ENCODE measurements at regions of chr4 and their contacts with region 1.

Region 1: DNA sequence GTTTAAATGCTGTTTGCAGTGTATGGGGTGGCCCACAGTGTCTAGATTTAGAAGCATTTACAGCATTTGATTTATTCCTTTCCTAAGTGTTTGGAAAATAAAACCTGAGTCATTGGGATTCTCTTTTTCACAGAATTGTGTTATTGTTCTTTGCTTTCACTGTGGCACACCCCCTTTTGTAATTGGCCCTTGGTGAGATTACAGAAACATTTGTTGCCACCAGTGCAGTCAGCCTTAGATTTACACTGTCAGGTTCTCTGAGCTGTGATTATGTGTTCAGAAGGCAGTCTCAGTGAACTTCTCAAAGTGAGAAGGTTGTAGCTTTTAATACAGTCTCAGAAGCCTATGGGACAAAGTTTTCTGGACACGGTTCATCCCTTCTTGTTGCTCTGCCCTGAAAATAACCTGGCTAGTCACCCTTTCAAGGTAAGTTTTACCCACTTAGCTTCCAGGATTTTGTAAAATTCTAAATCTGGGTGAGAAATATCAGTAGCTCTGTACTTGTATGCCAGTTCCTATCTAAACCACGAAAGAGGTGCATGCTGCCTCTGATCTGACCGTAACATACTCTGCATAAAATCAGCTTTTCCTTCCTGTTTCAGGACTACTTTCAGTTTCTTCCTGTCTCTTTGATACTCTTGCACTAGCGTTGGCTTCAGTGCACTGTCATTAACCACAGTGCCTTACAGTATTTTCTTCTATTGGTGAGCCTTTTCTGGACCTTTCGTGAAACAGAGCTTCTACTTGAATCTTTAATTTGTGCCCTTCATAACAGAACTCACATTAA is 12.6 kb downstream of the RUFY3 start:
- DNase-seq: peak; percentile 71
- ATAC-seq: peak; percentile 92
- H3K4me3 Mint-ChIP-seq: peak overlapping the region; percentile 73
- H3K27ac Mint-ChIP-seq: peak overlapping the region; percentile 87
- H3K4me1 Mint-ChIP-seq: peaks cover 32% of the 10 kb centered on the region
- H3K27me3 Mint-ChIP-seq: no peaks in the 10 kb centered on the region

Region 2: GRCh38 chr4:70687821-70688794 is 46.3 kb before region 1 on chr4 and contains the start of gene UTP3:
- CTCF ChIA-PET with region 1: interaction called, 30 read pairs
- DNase-seq: peak; percentile 93
- ATAC-seq: peak; percentile 93
- H3K4me3 Mint-ChIP-seq: peak within 1 kb of the TSS; percentile 99
- H3K27ac Mint-ChIP-seq: peak within 1 kb of the TSS; percentile 95
- H3K4me1 Mint-ChIP-seq: peaks cover 30% of the 10 kb centered on the region
- H3K27me3 Mint-ChIP-seq: no peaks in the 10 kb centered on the region
- total RNA-seq, gene UTP3: 28.0 to 33.6 TPM

Region 3: DNA sequence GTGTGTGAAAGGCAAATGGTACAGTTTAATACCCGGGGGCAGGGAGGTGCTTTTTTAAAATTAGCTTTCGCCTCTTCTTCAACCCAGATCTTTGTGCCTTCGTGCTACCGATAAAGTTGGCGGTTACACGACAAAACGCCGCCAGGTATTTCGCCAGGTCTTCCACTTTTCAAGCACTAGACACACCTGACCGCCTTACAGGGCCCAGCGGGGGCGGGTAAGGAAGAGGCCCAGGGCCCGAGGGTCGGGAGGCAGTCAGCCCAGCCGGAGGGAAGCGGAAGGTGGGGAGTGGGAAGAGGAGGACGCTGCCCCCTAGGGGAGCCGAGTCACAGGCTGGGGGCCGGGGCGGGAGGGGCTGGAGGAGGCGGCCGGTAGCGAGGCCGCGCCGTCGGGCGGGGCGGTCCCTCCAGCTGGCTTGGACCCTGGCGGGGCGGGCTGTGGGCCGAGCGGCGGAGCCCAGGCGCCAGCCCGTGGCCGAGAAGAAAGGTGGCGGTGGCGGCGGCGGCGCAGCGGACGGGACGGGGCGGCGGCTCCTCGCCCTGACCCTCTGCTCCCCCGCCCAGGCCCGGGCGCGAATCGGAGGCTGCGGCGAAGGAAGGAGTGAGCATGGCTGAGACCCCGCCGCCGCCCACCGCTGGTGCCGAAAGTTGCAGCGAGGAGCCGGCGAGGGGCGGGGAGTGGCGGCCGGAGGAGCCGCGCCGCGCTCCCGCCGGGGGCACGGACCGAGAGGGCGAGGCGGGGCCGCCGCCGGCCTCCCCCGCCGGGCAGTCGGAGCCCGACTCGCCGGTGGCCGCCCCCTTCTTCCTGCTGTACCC is 29.8 kb before region 1 on chr4:
- CTCF ChIA-PET with region 1: interaction called, 57 read pairs
- DNase-seq: peak; percentile 74
- ATAC-seq: peak; percentile 62
- H3K4me3 Mint-ChIP-seq: peak overlapping the region; percentile 77
- H3K27ac Mint-ChIP-seq: peak overlapping the region; percentile 71
- H3K4me1 Mint-ChIP-seq: peaks cover 20% of the 10 kb centered on the region
- H3K27me3 Mint-ChIP-seq: no peaks in the 10 kb centered on the region

Region 4: DNA sequence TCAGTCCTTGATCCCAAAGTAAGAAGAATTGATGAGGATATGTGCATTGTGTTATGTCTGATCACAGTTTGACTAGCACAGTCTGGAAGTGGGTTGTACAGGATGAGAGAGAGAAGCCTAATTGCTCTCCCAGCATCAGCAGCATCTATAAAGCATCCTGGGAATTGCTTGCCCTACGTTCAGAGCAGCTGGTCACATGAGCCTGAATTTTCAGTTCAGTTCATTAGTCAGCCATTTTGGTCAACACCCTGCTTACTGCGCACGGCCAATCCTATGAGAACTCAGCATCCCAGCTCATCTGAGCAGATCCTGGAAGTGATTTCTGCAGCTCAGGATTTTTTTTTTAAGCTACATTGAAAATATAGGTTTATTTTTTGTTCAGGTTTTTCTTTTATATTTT is 12.6 kb before region 1 on chr4 and contains the start of gene RUFY3:
- CTCF ChIA-PET with region 1: interaction called, 24 read pairs
- DNase-seq: no peak
- ATAC-seq: no peak
- H3K4me3 Mint-ChIP-seq: peak within 1 kb of the TSS; percentile 7
- H3K27ac Mint-ChIP-seq: peak within 1 kb of the TSS; percentile 7
- H3K4me1 Mint-ChIP-seq: peaks cover 16% of the 10 kb centered on the region
- H3K27me3 Mint-ChIP-seq: no peaks in the 10 kb centered on the region
- total RNA-seq, gene RUFY3: 12.7 to 22.8 TPM

Region 5: DNA sequence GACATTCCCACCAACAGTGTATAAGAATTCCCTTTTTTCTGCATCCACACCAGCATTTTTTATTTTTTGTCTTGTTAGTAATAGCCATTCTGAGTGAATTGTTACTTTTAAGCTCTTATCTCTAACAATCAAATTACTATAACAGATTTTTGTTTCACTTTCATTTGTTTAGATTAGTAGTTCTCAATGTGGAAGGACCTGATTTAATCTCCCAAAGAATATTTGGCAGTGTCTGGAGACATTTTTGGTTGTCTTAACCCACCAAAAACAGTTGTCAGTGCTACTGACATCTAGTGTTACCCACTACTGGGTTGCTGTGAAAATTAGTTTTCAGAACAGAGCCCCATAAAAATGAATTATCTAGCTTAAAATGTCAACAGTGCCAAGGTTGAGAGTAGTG is 25.3 kb after region 1 on chr4:
- CTCF ChIA-PET with region 1: interaction called, 22 read pairs
- DNase-seq: no peak
- ATAC-seq: no peak
- H3K4me3 Mint-ChIP-seq: no peak overlapping the region
- H3K27ac Mint-ChIP-seq: no peak overlapping the region
- H3K4me1 Mint-ChIP-seq: peaks cover 10% of the 10 kb centered on the region
- H3K27me3 Mint-ChIP-seq: no peaks in the 10 kb centered on the region

Region 6: GRCh38 chr4:70801265-70801809 is 67.0 kb after region 1 on chr4:
- CTCF ChIA-PET with region 1: interaction called, 10 read pairs
- DNase-seq: peak; percentile 45
- ATAC-seq: peak; percentile 93
- H3K4me3 Mint-ChIP-seq: no peak overlapping the region
- H3K27ac Mint-ChIP-seq: peak overlapping the region; percentile 58
- H3K4me1 Mint-ChIP-seq: peaks cover 18% of the 10 kb centered on the region
- H3K27me3 Mint-ChIP-seq: no peaks in the 10 kb centered on the region

Region 7: GRCh38 chr4:70839589-70840093 is 105.3 kb after region 1 on chr4 and contains the start of gene GRSF1:
- CTCF ChIA-PET with region 1: interaction called, 18 read pairs
- DNase-seq: peak; percentile 97
- ATAC-seq: peak; percentile 92
- H3K4me3 Mint-ChIP-seq: peak within 1 kb of the TSS; percentile 95
- H3K27ac Mint-ChIP-seq: peak within 1 kb of the TSS; percentile 96
- H3K4me1 Mint-ChIP-seq: peaks cover 37% of the 10 kb centered on the region
- H3K27me3 Mint-ChIP-seq: no peaks in the 10 kb centered on the region
- total RNA-seq, gene GRSF1: 59.3 to 80.7 TPM